Dendritic cell treated with granulocyte-macrophage colony-stimulating factor and Interleukin-4, amounts not matched to agents 40 ng/mL and 50 ng/mL, for 4 days (primary cell): ENCODE measurements at regions of chr6 and their contacts with region 1.

Region 1: DNA sequence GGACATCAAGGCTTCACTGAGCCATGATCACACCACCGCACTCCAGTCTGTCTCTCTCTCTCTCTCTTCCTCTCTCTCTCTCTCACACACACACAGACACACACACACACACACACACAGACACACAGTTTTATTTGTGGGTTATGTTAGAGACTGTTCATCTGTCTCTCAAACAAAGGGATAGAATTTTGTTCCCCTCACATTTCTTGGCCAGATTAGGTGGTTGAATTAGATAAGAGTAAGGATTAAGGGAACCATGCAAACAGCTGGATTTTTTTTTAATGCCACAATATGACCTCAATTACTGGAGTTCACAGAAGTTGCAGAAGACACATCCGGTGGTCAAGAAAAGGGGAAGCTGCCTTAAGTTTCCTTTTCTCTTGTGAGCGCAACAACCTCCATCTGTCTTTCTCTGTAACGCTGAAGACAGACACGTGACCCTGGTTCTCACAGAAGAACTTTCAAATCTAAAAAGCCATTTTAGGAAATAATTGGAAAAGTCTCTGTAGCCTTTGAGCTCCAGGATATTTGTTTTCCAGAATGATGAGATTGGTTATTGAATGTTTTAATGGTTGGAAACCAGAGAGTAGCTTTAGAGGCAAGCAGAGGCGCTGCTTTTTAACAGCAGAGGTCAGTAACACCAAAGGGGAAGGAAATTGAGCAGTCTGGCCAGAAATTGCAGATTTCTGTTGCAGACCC is 33.0 kb upstream of the LGSN start:
- H3K4me3 Mint-ChIP-seq: peak overlapping the region; percentile 70
- H3K27ac Mint-ChIP-seq: peak overlapping the region; percentile 69
- H3K4me1 Mint-ChIP-seq: peaks cover 29% of the 10 kb centered on the region
- H3K27me3 Mint-ChIP-seq: peaks cover 3% of the 10 kb centered on the region

Region 2: DNA sequence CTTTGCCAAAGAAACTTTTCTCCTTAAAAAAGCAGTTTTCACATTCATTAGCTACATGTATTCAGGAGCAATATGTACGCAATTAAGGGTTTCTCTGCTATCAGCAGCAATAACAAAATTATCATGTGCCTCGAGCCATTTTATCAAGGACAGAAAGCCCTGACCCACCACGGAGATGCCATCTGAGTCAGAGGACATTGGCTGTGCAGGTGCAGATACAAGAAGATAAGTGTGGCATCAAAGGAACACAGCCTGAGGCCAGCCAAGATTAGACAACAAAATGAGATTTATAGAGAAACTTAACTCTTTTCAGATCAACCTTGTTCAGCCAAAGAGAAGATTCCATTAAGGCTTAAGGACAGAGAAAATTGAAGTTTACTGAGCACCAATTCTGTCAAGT is 82.2 kb after region 1 on chr6:
- intact Hi-C with region 1: no loop called
- H3K4me3 Mint-ChIP-seq: no peak overlapping the region
- H3K27ac Mint-ChIP-seq: no peak overlapping the region
- H3K4me1 Mint-ChIP-seq: no peaks in the 10 kb centered on the region
- H3K27me3 Mint-ChIP-seq: peaks cover 3% of the 10 kb centered on the region

Region 3: DNA sequence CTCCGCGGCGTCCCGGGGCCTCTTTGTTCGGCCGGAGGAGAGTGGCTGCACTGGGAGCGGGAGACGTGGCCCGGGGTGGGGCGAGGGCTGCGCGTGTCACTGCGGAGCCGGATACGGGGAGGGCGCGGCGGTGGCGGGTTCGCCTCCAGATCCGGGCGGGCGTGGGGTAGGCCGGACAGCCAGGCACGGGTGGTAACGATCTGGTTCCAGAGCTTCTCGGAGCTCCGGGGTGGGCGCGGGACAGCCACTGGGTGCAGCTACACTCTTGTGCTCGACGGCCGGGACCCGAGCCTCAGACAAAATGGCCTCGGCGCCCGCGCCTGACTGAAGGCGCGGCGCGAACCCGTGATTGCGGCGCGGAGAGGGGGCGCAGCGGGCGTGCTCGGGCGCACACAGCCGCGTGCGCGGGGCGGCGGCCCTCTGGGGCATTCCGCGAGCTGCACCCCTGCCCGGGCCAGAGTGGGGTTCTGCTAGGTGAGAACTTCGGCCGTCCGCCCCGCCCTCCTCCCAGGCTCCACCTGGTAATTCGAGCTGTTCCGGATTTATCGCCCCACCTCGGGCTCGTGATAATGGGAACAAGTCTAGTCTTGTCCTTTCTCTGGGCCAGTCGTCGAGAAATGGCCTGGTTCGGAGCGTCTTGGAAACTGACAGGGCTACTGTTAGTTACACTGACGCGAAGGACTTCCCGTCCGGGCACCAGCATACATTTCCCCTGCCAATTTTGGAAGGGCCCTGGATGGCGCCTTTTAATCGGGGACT is 220.6 kb after region 1 on chr6:
- intact Hi-C with region 1: loop called (anchors 1 kb)
- H3K4me3 Mint-ChIP-seq: peak overlapping the region; percentile 93
- H3K27ac Mint-ChIP-seq: peak overlapping the region; percentile 97
- H3K4me1 Mint-ChIP-seq: peaks cover 5% of the 10 kb centered on the region
- H3K27me3 Mint-ChIP-seq: peaks cover 2% of the 10 kb centered on the region

Region 4: GRCh38 chr6:63635588-63636517 is 283.1 kb after region 1 on chr6 and contains the start of gene PHF3:
- intact Hi-C with region 1: loop called (anchors 2 kb)
- H3K4me3 Mint-ChIP-seq: peak within 1 kb of the TSS; percentile 91
- H3K27ac Mint-ChIP-seq: peak within 1 kb of the TSS; percentile 98
- H3K4me1 Mint-ChIP-seq: peaks cover 44% of the 10 kb centered on the region
- H3K27me3 Mint-ChIP-seq: no peaks in the 10 kb centered on the region

Region 5: DNA sequence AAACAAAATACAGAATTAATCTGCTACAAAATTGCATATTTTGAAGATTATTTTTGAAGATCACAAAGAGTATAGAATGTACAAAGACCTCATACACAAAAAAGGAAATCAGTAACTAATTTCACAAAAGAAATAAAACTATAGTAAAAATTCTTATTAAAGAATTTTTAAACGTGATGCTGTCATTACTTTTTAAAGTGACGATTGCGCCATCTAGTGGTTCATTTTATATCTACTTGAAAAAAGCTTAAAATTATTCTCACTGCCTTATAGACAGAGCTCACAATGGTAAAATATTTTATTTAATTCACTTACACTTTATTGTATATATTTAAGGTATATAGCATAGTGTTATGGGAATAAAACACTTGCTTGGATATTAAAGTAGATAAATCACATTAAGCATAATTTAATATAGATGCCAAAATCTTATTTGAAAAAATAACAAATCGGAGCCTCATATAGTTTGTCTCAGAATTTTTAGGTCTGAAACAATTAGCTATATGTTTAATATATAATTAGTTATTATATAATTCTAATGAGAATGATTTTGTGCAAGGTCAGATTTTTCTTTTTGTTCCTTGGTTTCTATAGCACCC is 411.7 kb after region 1 on chr6:
- intact Hi-C with region 1: loop called (anchors 1 kb)
- H3K4me3 Mint-ChIP-seq: no peak overlapping the region
- H3K27ac Mint-ChIP-seq: no peak overlapping the region
- H3K4me1 Mint-ChIP-seq: no peaks in the 10 kb centered on the region
- H3K27me3 Mint-ChIP-seq: no peaks in the 10 kb centered on the region